ENCODE measurements at regions of chr16 and their contacts with region 1.

Region 1: GRCh38 chr16:84326545-84326944 is 31.9 kb downstream of the WFDC1 start:
- DNase-seq: no peak
- ATAC-seq: no peak
- H3K4me3 ChIP-seq: no peak overlapping the region
- H3K27ac ChIP-seq: no peak overlapping the region
- H3K4me1 ChIP-seq: no peaks in the 10 kb centered on the region
- H3K27me3 ChIP-seq: no peaks in the 10 kb centered on the region
- CTCF ChIP-seq: no peak

Region 2: DNA sequence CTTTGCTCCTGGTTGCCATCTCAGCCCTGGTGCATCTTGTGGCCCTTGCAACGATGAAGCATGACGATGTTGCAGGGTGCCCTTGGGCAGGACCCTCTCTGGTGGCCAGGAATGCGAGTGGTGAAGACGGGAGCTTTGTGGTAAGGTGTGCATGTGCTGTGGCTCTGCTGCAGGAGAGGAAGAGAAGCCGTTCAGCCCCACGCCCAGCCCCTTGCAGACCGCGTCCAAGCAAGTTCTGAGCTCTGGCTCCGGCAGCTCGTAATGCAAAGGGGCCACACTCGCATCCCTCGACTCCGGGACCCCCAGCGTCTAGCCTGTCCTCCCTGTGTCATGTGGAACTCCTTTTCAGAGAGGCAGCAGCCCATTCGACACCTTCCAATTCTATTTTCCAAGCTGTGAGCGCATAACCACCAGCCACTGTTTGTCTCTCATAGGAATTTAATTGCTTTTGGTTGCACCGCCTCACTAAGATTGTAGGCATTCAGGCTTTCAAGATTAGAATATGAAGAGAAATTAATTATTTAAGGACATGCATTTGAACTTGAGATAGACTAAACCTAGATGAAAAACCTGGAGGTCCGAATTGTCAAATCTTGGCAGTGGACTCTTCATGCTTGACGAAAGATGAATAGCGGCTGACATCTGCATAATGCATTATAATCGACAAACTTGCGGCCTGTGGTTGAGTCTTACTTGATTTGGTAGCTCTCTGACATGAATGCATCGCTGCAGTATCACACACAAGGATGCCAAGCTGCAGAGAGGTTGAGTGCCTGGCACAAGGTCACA is 65.6 kb before region 1 on chr16:
- CTCF ChIA-PET with region 1: no interaction called
- POLR2A ChIA-PET with region 1: no interaction called
- in situ Hi-C with region 1: no loop called
- intact Hi-C with region 1: no loop called
- DNase-seq: no peak
- ATAC-seq: no peak
- H3K4me3 ChIP-seq: no peak overlapping the region
- H3K27ac ChIP-seq: no peak overlapping the region
- H3K4me1 ChIP-seq: no peaks in the 10 kb centered on the region
- H3K27me3 ChIP-seq: no peaks in the 10 kb centered on the region
- CTCF ChIP-seq: no peak

Region 3: GRCh38 chr16:84464967-84465553 is 138.5 kb after region 1 on chr16:
- CTCF ChIA-PET with region 1: no interaction called
- POLR2A ChIA-PET with region 1: interaction called, 12 read pairs
- in situ Hi-C with region 1: no loop called
- intact Hi-C with region 1: no loop called
- DNase-seq: no peak
- ATAC-seq: no peak
- H3K4me3 ChIP-seq: no peak overlapping the region
- H3K27ac ChIP-seq: no peak overlapping the region
- H3K4me1 ChIP-seq: no peaks in the 10 kb centered on the region
- H3K27me3 ChIP-seq: no peaks in the 10 kb centered on the region
- CTCF ChIP-seq: no peak